Dorsolateral prefrontal cortex (tissue), 120 donors: ENCODE measurements at regions of chr10 and their contacts with region 1.

Region 1: DNA sequence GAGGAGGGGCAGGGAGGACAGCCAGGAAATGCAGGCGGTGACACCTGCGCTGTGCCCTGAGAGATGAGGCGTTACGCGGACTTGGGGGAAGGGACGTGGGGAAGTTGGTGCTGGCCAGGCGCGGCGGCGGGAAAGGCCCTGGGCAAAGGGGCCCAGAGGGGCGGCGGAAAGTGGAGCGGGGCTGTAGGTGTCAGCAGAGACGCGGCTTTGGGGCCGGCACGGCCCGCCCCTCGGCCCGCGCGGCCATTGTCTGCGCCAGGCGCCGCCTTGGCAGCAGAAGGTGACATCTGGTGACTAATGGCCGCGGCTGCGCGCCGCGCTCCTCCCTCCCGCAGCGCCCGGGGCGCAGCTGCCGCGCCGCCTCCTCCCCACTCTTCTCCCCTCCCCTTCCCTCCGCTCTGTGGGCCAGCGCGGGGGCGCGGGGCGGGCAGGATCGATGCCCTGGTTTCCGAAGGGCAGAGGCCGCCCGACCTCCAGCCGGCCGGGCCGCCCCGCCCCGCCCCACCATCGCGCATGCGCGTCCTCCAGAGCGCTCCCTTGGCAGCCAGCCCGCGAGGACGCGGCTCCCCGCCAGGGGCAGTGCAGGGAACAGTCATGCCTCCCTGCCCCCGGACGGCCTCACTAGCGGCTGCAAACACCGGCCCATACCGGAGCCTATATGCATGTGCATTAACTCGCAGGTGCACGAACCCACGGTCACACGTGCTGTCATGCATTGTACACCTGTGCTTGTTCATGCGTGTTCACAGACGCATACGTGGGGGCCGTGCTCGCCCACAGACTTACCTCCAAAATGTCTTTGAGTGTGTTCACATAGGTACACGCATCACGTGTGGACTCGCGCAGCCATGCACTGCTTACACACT is 269.6 kb downstream of the RPS24 start:
- DNase-seq: peak; percentile 79 to 95 (median 90)
- H3K4me3 ChIP-seq: peak overlapping the region; percentile 36 to 78 (median 65)
- H3K27ac ChIP-seq: peak overlapping the region; percentile 70 to 99 (median 96)
- H3K27me3 ChIP-seq: no peaks in the 10 kb centered on the region
- CTCF ChIP-seq: peak; percentile 14 to 73 (median 57)

Region 2: DNA sequence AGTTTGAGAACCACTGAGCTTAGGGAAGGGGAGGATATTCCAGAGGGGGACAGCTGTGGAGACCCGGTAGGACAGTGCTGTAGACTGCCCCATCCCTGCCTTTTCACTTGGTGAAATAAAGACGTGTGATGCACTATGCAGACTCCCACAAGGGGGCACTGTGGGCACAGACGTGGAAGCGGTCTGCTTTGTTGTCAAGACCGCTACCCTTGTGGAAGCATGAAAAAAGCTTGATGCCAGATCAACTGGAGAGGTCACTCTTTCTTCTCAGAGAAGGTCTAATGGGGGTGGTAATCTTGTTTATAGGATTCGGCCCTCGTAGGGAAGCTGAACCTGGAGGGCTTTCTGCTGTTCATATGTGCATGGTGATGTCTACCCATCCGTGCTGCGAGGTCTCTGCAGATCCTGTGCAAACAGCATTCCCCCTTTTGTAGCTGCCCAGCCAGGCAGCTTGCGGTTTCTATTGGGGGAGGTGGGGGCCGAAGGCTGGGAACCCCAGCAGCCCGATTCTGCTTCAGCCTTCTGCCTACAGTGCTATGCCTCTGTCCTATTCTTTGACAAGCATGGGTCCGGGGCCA is 255.8 kb before region 1 on chr10:
- intact Hi-C with region 1: loop called (anchors 2 to 5 kb)
- DNase-seq: peak; percentile 88 to 98 (median 92)
- H3K4me3 ChIP-seq: peak overlapping the region in 17 of 59 donors; percentile 10 to 32 (median 22)
- H3K27ac ChIP-seq: peak overlapping the region in 12 of 59 donors; percentile 19 to 66 (median 42)
- H3K27me3 ChIP-seq: no peaks in the 10 kb centered on the region
- CTCF ChIP-seq: peak; percentile 88 to 99 (median 94)

Region 3: DNA sequence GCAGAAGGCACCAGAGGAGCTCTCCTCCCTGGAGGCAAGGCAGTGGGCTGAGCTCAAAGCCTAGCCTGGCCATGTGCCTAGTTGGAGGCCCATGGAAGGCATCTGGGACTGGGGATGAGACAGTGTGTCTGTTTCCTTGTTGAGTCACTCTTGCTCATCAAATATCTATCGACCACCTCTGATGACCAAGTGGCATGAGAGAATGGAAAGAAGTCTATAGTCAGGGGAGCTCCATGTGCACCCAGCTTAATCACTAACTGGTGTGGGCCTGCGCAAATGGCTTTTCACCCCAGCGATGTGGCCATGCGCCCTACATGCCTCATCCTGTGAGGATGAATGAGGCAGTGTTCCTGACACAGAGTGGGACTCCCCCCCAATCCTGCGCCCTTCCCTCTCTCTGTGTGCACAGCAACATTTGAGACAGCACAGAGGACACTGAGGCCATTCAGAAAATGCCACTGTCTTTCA is 39.7 kb before region 1 on chr10:
- intact Hi-C with region 1: loop called (anchors 1 to 2 kb)
- DNase-seq: peak in 9 of 10 donors; percentile 73 to 93 (median 83)
- H3K4me3 ChIP-seq: peak overlapping the region in 2 of 59 donors; percentile 32 to 35
- H3K27ac ChIP-seq: peak overlapping the region; percentile 2 to 98 (median 90)
- H3K27me3 ChIP-seq: no peaks in the 10 kb centered on the region
- CTCF ChIP-seq: peak in 4 of 56 donors; percentile 9 to 32 (median 16)

Region 4: DNA sequence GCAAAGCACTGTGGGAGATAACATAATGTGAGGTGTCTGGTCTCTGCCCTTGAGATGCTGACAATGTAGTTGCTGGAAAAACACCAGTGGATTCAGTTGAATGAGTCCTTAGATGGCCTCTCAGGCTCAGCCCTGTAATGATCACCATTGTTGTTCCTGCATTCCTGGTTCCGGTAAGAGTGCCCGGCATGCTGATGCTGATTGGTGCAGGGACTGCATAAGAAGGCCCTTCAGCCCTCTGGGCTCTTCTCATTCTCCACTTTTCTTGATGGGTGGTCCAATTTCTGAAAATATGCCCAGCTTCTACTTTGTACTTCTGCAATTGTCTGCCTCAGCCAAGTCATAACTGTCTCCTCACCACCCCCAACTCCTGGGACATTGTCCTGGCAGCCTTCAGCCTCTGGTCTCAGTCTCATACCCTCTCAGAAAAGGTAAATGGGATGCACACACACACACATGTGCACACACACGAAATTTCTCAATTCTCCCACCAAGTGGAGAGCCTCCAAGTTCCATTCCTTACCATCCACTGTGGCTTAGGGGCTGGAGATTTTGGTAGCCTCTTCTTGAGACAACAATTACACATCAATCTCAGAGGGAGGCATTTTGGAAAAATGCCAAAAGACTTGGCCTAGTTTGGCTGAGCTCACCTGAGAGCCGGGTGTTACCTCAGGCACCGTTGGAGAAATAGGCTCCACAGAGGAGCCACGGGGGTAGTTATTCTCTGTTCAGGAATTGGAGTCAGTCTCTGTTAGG is 45.4 kb after region 1 on chr10:
- intact Hi-C with region 1: no loop called
- DNase-seq: peak in 2 of 10 donors; percentile 16 to 30
- H3K4me3 ChIP-seq: no peak overlapping the region
- H3K27ac ChIP-seq: no peak overlapping the region
- H3K27me3 ChIP-seq: no peaks in the 10 kb centered on the region
- CTCF ChIP-seq: no peak

Region 5: DNA sequence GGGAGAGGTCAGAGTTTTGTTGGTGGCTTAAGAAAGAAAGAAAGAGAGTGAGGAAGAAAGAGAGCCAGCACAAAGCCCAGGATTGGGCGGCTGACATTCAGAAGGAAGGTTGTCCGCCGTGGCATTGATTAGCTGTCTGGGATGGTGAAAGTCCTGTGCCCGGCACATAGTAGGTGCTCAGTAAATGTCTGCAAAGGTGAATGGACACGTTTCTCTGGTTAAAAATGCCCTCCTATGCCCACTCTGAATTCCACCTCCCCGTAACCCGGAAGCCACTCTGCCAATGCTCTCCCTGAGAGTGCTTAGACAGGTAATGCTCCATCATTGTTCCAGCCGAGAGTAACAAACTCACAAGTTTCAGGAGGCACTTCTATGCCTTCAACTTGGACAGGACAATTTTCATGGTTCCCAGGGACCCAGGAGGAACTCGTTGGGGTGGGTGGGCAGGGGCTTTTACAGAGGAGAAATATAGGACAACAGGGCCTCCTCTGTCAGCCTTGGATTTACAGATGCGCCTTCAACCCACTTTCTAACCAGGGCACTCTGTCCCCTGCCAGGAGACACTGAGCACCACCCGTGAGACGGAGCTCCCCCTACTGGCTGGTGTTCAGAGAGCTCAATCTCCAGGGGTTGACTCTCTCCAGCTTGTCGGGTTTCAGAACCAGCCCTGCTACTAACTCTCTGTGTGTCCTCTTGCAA is 354.1 kb after region 1 on chr10:
- intact Hi-C with region 1: loop called (anchors 2 to 5 kb)
- DNase-seq: peak; percentile 19 to 70 (median 58)
- H3K4me3 ChIP-seq: peak overlapping the region in 2 of 59 donors; percentile 9 to 25
- H3K27ac ChIP-seq: peak overlapping the region in 4 of 59 donors; percentile 8 to 54 (median 15)
- H3K27me3 ChIP-seq: no peaks in the 10 kb centered on the region
- CTCF ChIP-seq: peak in 55 of 56 donors; percentile 23 to 73 (median 61)

Region 6: GRCh38 chr10:78846760-78847159 is 543.5 kb after region 1 on chr10:
- intact Hi-C with region 1: loop called in 1 of 2 experiments (anchors 10 kb)
- DNase-seq: peak; percentile 45 to 83 (median 67)
- H3K4me3 ChIP-seq: no peak overlapping the region
- H3K27ac ChIP-seq: peak overlapping the region in 39 of 59 donors; percentile 1 to 75 (median 47)
- H3K27me3 ChIP-seq: no peaks in the 10 kb centered on the region
- CTCF ChIP-seq: peak in 1 of 56 donors; percentile 14

Region 7: GRCh38 chr10:79266543-79267312 is 963.5 kb after region 1 on chr10:
- intact Hi-C with region 1: no loop called
- DNase-seq: peak in 3 of 10 donors; percentile 47 to 81 (median 62)
- H3K4me3 ChIP-seq: peak overlapping the region in 2 of 59 donors; percentile 12 to 16
- H3K27ac ChIP-seq: peak overlapping the region; percentile 6 to 97 (median 85)
- H3K27me3 ChIP-seq: no peaks in the 10 kb centered on the region
- CTCF ChIP-seq: no peak